Posterior cingulate gyrus (tissue), 11 donors: ENCODE measurements at regions of chr20 and their contacts with region 1.

Region 1: DNA sequence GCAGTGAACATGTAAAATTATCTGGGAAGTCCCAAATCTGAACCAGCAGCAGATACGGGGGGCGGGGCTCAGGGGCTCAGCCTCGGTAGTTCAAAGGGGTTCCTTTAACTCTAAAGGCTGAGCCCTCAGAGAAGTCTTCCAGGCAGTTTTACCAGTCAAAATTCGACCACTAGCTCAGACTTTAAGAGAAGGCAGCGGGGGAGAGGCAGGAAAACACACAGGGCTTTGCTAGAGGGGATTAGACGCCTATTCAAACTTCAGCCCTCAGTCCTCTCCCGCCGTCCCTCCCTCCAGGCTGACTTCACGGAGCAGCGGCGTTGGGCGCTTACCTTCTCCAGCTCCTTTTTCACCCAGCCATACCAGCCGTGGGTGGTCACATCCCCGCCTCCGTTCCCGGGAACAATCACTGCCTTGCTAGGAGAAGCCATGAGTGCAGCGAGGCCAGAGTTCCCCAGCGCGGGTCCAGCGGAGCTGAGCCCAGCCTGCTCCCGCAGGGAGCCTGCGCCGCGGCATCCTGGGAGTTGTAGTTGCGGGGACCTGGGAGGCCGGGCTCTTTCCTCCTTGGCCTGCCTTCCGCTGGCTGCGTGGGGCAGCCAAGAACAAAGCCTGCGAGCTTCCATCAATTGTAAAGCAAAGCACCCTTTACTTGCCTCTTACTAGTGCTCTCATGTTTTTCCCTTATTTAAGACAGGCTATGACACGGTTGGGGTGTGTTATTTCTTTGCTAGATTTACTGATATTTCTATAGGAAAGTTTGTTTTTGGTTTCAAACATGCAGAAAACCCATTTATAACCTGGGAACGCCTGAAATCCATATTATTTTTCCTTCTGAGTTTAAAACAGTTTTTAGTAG is at the start of gene RBBP9:
- DNase-seq: peak; percentile 77 to 98 (median 90)

Region 2: GRCh38 chr20:18466894-18467730 is 29.9 kb before region 1 on chr20 and contains the starts of genes DZANK1 and POLR3F:
- intact Hi-C with region 1: loop called (anchors 2 kb)
- DNase-seq: peak; percentile 94 to 100 (median 97)

Region 3: GRCh38 chr20:18566892-18567742 is 70.2 kb after region 1 on chr20 and contains the start of gene SMIM26:
- intact Hi-C with region 1: no loop called
- DNase-seq: peak; percentile 83 to 98 (median 92)

Region 4: GRCh38 chr20:18613556-18613955 is 116.6 kb after region 1 on chr20:
- intact Hi-C with region 1: no loop called
- DNase-seq: no peak

Region 5: GRCh38 chr20:18916886-18917750 is 420.2 kb after region 1 on chr20:
- intact Hi-C with region 1: no loop called
- DNase-seq: no peak